ENCODE measurements at regions of chr3 and their contacts with region 1.

Region 1: GRCh38 chr3:149621218-149622005 is 36.4 kb downstream of the WWTR1 start:
- DNase-seq: no peak
- H3K4me3 Mint-ChIP-seq: no peak overlapping the region
- H3K27ac Mint-ChIP-seq: peak overlapping the region; percentile 2
- H3K4me1 Mint-ChIP-seq: peaks cover 31% of the 10 kb centered on the region
- H3K27me3 Mint-ChIP-seq: peaks cover 10% of the 10 kb centered on the region

Region 2: GRCh38 chr3:149575961-149576564 is 45.3 kb before region 1 on chr3:
- intact Hi-C with region 1: loop called (anchors 1 kb)
- DNase-seq: no peak
- H3K4me3 Mint-ChIP-seq: no peak overlapping the region
- H3K27ac Mint-ChIP-seq: peak overlapping the region; percentile 42
- H3K4me1 Mint-ChIP-seq: peaks cover 57% of the 10 kb centered on the region
- H3K27me3 Mint-ChIP-seq: no peaks in the 10 kb centered on the region

Region 3: GRCh38 chr3:149726716-149727407 is 105.5 kb after region 1 on chr3:
- intact Hi-C with region 1: loop called (anchors 1 kb)
- DNase-seq: no peak
- H3K4me3 Mint-ChIP-seq: no peak overlapping the region
- H3K27ac Mint-ChIP-seq: no peak overlapping the region
- H3K4me1 Mint-ChIP-seq: no peaks in the 10 kb centered on the region
- H3K27me3 Mint-ChIP-seq: peaks cover 7% of the 10 kb centered on the region